Panc1 (cell line): ENCODE measurements at regions of chr13 and their contacts with region 1.

Region 1: GRCh38 chr13:52011632-52012511 is at the start of gene ALG11:
- DNase-seq: peak; percentile 81
- ATAC-seq: peak; percentile 99
- H3K4me3 ChIP-seq: peak within 1 kb of the TSS; percentile 98 to 99
- H3K27ac ChIP-seq: peak within 1 kb of the TSS; percentile 89
- H3K4me1 ChIP-seq: peaks cover 8% of the 10 kb centered on the region
- H3K27me3 ChIP-seq: no peaks in the 10 kb centered on the region
- CTCF ChIP-seq: no peak
- total RNA-seq, gene ALG11: 23.9 TPM

Region 2: DNA sequence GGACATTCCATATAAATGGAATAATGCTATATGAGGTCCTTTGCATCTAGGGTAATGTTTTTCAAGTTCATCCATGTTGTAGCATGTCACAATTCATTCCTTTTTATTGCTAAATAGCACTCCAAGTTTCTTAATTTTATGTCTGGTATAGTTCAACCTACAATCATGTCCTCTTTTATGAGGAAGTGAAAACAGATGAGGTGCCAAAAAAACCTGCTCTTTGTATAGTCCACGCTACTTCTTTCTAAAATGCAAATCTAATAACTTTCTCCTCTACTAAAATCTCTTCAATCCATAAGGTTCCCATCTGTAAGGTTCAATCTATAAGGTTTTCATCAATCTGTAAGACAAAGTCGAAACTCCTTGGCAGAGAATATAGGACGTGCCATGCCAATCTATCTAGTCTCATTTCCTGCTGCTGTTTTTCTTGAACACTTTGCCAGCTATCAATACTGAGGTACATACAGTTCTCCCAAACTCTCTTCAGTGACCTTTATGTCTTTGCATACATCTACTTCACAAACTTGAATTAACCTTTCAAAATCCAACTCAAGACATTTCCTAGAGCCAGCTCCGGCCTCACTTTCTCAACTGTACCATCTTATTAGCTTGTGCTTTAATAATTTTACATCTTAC is 592.8 kb before region 1 on chr13:
- CTCF ChIA-PET with region 1: no interaction called
- POLR2A ChIA-PET with region 1: no interaction called
- in situ Hi-C with region 1: no loop called
- intact Hi-C with region 1: no loop called
- DNase-seq: no peak
- ATAC-seq: no peak
- H3K4me3 ChIP-seq: no peak overlapping the region
- H3K27ac ChIP-seq: no peak overlapping the region
- H3K4me1 ChIP-seq: no peaks in the 10 kb centered on the region
- H3K27me3 ChIP-seq: no peaks in the 10 kb centered on the region
- CTCF ChIP-seq: no peak

Region 3: GRCh38 chr13:51895906-51896888 is 115.7 kb before region 1 on chr13:
- CTCF ChIA-PET with region 1: no interaction called
- POLR2A ChIA-PET with region 1: no interaction called
- in situ Hi-C with region 1: no loop called
- intact Hi-C with region 1: no loop called
- DNase-seq: peak; percentile 17
- ATAC-seq: peak; percentile 89
- H3K4me3 ChIP-seq: no peak overlapping the region
- H3K27ac ChIP-seq: no peak overlapping the region
- H3K4me1 ChIP-seq: no peaks in the 10 kb centered on the region; the same call in 1 of the 2 replicates
- H3K27me3 ChIP-seq: no peaks in the 10 kb centered on the region
- CTCF ChIP-seq: peak; percentile 86

Region 4: GRCh38 chr13:52118595-52118994 is 106.7 kb after region 1 on chr13:
- CTCF ChIA-PET with region 1: no interaction called
- POLR2A ChIA-PET with region 1: interaction called, 10 read pairs
- in situ Hi-C with region 1: no loop called
- intact Hi-C with region 1: no loop called
- DNase-seq: no peak
- ATAC-seq: no peak
- H3K4me3 ChIP-seq: no peak overlapping the region
- H3K27ac ChIP-seq: no peak overlapping the region
- H3K4me1 ChIP-seq: no peaks in the 10 kb centered on the region
- H3K27me3 ChIP-seq: no peaks in the 10 kb centered on the region
- CTCF ChIP-seq: no peak

Region 5: DNA sequence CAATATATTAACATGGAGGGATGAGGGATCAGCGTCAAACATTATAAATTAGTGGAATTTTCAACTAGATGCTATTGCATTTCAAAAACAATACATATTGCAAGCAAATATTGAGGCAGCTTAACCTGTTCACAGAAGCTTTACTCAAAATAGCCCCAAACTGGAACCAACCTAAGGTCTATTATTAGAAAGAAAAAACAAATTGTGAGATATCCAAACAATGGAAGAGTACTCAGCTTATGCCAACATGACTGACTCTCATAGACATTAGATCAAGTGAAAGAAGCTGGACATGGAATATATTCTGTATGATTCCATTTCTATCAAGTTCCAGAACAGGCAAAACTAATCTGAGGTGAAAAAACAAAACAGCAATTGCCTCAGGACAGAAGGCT is 175.2 kb after region 1 on chr13:
- CTCF ChIA-PET with region 1: no interaction called
- POLR2A ChIA-PET with region 1: interaction called, 14 read pairs
- in situ Hi-C with region 1: no loop called
- intact Hi-C with region 1: loop called (anchors 10 kb)
- DNase-seq: no peak
- ATAC-seq: no peak
- H3K4me3 ChIP-seq: no peak overlapping the region
- H3K27ac ChIP-seq: no peak overlapping the region
- H3K4me1 ChIP-seq: peaks cover 2% of the 10 kb centered on the region; the same call in 1 of the 2 replicates
- H3K27me3 ChIP-seq: no peaks in the 10 kb centered on the region
- CTCF ChIP-seq: no peak